ENCODE measurements at regions of chr2 and their contacts with region 1.

Region 1: DNA sequence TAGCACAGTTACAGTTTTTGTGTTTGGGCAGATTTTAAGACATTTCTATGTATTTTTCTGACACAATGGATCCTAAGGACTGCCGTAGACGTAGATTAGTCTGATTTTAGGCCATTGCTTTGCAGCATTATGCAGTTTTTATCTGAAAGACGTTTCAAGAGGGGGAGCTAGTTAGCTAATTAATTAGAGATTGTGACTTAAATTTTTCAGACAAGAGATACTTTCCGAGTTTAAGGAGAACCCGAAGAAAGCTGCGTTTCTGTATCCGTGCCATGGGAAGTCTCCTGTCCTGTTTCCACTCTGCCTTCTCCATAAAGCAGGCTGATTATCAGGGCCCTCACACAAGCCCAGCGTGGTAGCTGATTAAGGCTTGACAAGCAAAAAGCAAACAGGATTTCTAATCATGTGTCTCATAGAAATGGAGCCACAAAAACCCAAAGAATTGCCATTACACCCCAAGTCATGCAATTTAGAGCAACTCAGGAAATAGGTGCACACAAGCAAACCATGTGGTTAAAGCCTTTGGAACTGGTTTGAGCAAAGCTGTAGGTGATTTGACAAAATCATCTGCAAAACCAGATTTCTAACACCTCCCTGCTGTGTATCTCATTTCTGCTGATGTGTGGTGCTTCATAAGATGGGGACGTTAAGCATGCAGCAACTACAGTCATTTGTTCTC is 808.1 kb downstream of the RNF144A start:
- DNase-seq: peak; percentile 64
- H3K4me3 Mint-ChIP-seq: peak overlapping the region; percentile 87
- H3K27ac Mint-ChIP-seq: peak overlapping the region; percentile 95
- H3K4me1 Mint-ChIP-seq: peaks cover 73% of the 10 kb centered on the region
- H3K27me3 Mint-ChIP-seq: no peaks in the 10 kb centered on the region

Region 2: GRCh38 chr2:7450188-7450832 is 275.0 kb before region 1 on chr2:
- intact Hi-C with region 1: loop called (anchors 1 kb)
- DNase-seq: peak; percentile 65
- H3K4me3 Mint-ChIP-seq: peak overlapping the region; percentile 9
- H3K27ac Mint-ChIP-seq: peak overlapping the region; percentile 98
- H3K4me1 Mint-ChIP-seq: peaks cover 90% of the 10 kb centered on the region
- H3K27me3 Mint-ChIP-seq: no peaks in the 10 kb centered on the region

Region 3: DNA sequence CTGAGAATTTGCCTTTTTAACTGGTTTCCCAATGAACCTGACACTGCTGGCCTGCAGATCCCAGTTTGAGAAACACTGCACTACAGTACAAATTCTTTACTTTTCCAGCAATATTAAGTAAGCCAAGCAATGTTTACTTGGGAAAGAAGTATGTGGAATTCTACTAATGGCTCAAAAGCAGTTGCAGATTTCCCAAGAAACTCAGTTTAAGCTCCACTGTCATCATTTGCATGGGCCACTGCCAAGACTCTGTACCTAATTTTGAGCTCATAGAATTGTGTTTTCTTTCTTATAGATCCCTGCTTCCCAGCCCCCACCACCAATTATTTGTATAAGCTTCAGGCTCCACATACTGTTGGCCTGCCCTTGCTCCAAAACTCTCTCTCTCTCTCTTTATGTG is 131.9 kb before region 1 on chr2:
- intact Hi-C with region 1: loop called (anchors 5 kb)
- DNase-seq: no peak
- H3K4me3 Mint-ChIP-seq: no peak overlapping the region
- H3K27ac Mint-ChIP-seq: no peak overlapping the region
- H3K4me1 Mint-ChIP-seq: peaks cover 27% of the 10 kb centered on the region
- H3K27me3 Mint-ChIP-seq: no peaks in the 10 kb centered on the region

Region 4: DNA sequence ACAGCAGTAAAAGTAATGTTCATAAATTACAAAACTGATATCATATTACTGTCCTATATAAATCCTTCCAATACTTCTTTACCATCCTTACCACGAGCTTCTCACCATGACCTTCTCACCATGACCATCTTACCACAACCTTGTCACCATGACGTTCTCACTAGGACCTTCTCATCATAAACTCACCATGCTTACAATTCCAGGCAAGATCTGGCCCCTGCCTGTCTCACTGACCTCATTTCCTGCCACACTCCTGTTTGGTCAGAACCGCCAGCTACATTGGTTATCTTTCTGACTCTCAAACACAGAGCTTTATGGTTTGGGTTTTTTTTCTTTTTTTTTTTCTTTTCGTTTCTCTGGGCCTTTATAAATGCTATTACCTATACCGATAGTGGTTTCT is 19.5 kb after region 1 on chr2:
- intact Hi-C with region 1: loop called (anchors 2 kb)
- DNase-seq: peak; percentile 35
- H3K4me3 Mint-ChIP-seq: peak overlapping the region; percentile 8
- H3K27ac Mint-ChIP-seq: peak overlapping the region; percentile 81
- H3K4me1 Mint-ChIP-seq: peaks cover 44% of the 10 kb centered on the region
- H3K27me3 Mint-ChIP-seq: no peaks in the 10 kb centered on the region

Region 5: DNA sequence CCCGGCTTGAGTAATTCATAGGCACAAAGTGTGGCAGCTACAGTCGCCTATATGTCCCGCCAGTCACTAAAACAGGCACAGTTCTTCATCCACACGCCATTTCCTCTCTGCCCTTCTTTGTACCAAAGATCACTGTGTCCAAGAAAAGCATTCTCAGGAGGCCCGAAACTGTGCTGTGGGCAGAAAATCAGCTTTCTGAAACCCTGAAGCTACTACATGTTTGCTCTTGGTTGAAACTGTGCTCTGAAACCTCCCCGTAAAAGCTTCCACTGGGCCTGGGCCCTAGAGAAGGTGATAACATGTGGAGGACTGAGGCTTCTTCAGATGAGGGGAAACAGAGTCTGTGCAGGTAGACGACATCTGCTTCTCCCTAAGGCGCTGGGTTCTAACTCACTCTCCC is 880.9 kb after region 1 on chr2:
- intact Hi-C with region 1: loop called (anchors 1 kb)
- DNase-seq: no peak
- H3K4me3 Mint-ChIP-seq: no peak overlapping the region
- H3K27ac Mint-ChIP-seq: no peak overlapping the region
- H3K4me1 Mint-ChIP-seq: peaks cover 44% of the 10 kb centered on the region
- H3K27me3 Mint-ChIP-seq: peaks cover 1% of the 10 kb centered on the region

Measured in activated T-helper 1 cell treated with anti-CD3 and anti-CD28 coated beads, Interleukin-12 subunit alpha, Interleukin-12 subunit beta, Interleukin-2, Interleukin-4 antibody, amounts not matched to agents 30 ng/mL and 10 ng/mL and 1 ng/mL, durations not matched to agents 14 hours and 24 hours and 36 hours (primary cell).